GM23248 (cell line): ENCODE measurements at regions of chr15 and their contacts with region 1.

Region 1: DNA sequence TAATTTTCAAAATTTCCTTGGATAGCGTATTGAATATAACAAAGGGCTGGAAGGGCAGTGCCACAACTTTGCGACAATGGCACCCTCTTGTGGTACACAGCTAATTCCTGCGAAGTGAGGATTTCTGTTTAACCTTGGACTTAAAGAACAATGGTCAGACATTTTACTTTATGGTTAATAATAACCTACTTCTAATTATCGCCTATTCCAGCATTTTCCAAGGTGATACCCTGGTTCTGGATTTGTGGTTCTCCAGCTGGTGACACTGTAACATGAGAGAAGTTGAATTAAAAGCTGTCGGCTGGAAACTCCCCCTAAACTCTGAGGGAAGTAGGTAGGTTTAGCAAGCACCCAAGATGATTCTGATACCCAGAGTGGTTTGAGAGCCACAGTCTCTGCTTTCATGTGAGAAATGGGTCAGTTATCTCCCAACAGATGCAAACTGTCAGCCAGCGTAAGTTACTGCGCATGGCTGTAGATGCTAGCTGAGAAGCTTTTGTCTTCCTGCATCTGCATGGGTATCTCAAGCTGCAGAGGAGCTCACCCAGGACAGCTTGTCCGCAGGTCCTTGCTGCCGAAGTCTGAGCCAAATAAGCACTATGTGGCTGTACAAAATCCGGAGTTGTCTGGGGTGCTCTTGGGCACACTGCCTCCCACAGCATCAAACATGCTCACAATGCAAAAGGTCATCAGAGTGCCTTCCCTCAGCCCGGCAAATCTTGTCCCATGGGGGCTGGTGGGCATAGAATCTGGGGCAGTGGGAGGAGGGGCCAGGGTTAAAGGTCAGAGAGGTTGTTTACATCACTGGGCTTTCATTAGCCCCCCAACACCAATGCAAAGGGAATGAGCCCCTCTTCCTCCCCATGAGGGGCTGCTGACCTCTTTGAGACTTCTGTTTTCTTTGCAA is 6.6 kb upstream of the CHSY1 start:
- DNase-seq: peak; percentile 86
- H3K4me3 ChIP-seq: no peak overlapping the region
- H3K27ac ChIP-seq: no peak overlapping the region
- H3K4me1 ChIP-seq: peaks cover 6% of the 10 kb centered on the region; the same call in 1 of the 2 replicates
- H3K27me3 ChIP-seq: no peaks in the 10 kb centered on the region

Region 2: GRCh38 chr15:101014921-101015841 is 243.3 kb before region 1 on chr15:
- in situ Hi-C with region 1: loop called (anchors 5 kb)
- DNase-seq: peak; percentile 73
- H3K4me3 ChIP-seq: no peak overlapping the region
- H3K27ac ChIP-seq: no peak overlapping the region
- H3K4me1 ChIP-seq: no peaks in the 10 kb centered on the region
- H3K27me3 ChIP-seq: no peaks in the 10 kb centered on the region

Region 3: GRCh38 chr15:101045236-101045646 is 213.2 kb before region 1 on chr15:
- in situ Hi-C with region 1: no loop called
- DNase-seq: no peak
- H3K4me3 ChIP-seq: no peak overlapping the region
- H3K27ac ChIP-seq: no peak overlapping the region
- H3K4me1 ChIP-seq: no peaks in the 10 kb centered on the region
- H3K27me3 ChIP-seq: no peaks in the 10 kb centered on the region

Region 4: DNA sequence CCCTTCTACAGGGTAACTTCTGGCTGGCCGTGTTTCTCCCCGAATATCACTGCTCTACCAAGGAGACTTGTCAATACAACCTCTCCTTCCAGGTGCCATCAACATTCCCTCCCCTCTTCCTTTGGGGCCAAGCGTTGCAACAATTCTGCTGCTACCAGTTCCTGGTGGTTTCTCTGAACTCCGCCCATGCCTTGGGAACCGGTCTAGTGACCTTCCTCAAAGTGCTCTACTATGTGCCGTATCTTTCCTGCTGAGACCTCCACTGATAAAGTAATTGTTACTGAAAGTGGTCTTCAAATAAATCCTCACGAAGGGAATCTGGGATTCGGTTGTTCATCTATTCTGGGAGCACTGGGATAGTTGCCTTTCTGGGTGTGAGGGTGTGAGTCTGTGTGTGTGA is 204.8 kb after region 1 on chr15:
- in situ Hi-C with region 1: no loop called
- DNase-seq: no peak
- H3K4me3 ChIP-seq: no peak overlapping the region
- H3K27ac ChIP-seq: no peak overlapping the region
- H3K4me1 ChIP-seq: no peaks in the 10 kb centered on the region
- H3K27me3 ChIP-seq: peaks cover 29% of the 10 kb centered on the region

Region 5: GRCh38 chr15:101625980-101626379 is 367.5 kb after region 1 on chr15:
- in situ Hi-C with region 1: no loop called
- DNase-seq: peak; percentile 60
- H3K4me3 ChIP-seq: no peak overlapping the region
- H3K27ac ChIP-seq: no peak overlapping the region
- H3K4me1 ChIP-seq: peaks cover 9% of the 10 kb centered on the region; the same call in 1 of the 2 replicates
- H3K27me3 ChIP-seq: no peaks in the 10 kb centered on the region